ENCODE measurements at regions of chr9 and their contacts with region 1.

Region 1: GRCh38 chr9:113949571-113950078 is 73.5 kb downstream of the ZNF618 start:
- DNase-seq: no peak
- ATAC-seq: no peak
- H3K4me3 ChIP-seq: no peak overlapping the region
- H3K4me3 Mint-ChIP-seq: no peak overlapping the region
- H3K27ac ChIP-seq: no peak overlapping the region
- H3K27ac Mint-ChIP-seq: no peak overlapping the region
- H3K4me1 ChIP-seq: no peaks in the 10 kb centered on the region
- H3K4me1 Mint-ChIP-seq: peaks cover 6 to 7% of the 10 kb centered on the region in 2 donors
- H3K27me3 ChIP-seq: no peaks in the 10 kb centered on the region
- H3K27me3 Mint-ChIP-seq: no peaks in the 10 kb centered on the region
- CTCF ChIP-seq: no peak

Region 2: GRCh38 chr9:113906411-113907110 is 43.1 kb before region 1 on chr9:
- intact Hi-C with region 1: loop called (anchors 2 kb)
- DNase-seq: no peak
- ATAC-seq: no peak
- H3K4me3 ChIP-seq: no peak overlapping the region
- H3K4me3 Mint-ChIP-seq: no peak overlapping the region
- H3K27ac ChIP-seq: no peak overlapping the region
- H3K27ac Mint-ChIP-seq: no peak overlapping the region
- H3K4me1 ChIP-seq: no peaks in the 10 kb centered on the region
- H3K4me1 Mint-ChIP-seq: peaks cover 0 to 8% of the 10 kb centered on the region in 2 donors
- H3K27me3 ChIP-seq: no peaks in the 10 kb centered on the region
- H3K27me3 Mint-ChIP-seq: no peaks in the 10 kb centered on the region
- CTCF ChIP-seq: no peak

Measured in natural killer cell (primary cell).